GM23248 (cell line): ENCODE measurements at regions of chr6 and their contacts with region 1.

Region 1: GRCh38 chr6:131923356-131923755 is 27.8 kb downstream of the CCN2 start:
- DNase-seq: peak; percentile 60
- H3K4me3 ChIP-seq: no peak overlapping the region
- H3K27ac ChIP-seq: no peak overlapping the region
- H3K4me1 ChIP-seq: peaks cover 17% of the 10 kb centered on the region
- H3K27me3 ChIP-seq: no peaks in the 10 kb centered on the region

Region 2: GRCh38 chr6:132259070-132259469 is 335.7 kb after region 1 on chr6:
- in situ Hi-C with region 1: loop called (anchors 10 kb)
- DNase-seq: peak; percentile 64
- H3K4me3 ChIP-seq: no peak overlapping the region
- H3K27ac ChIP-seq: no peak overlapping the region
- H3K4me1 ChIP-seq: no peaks in the 10 kb centered on the region
- H3K27me3 ChIP-seq: no peaks in the 10 kb centered on the region

Region 3: DNA sequence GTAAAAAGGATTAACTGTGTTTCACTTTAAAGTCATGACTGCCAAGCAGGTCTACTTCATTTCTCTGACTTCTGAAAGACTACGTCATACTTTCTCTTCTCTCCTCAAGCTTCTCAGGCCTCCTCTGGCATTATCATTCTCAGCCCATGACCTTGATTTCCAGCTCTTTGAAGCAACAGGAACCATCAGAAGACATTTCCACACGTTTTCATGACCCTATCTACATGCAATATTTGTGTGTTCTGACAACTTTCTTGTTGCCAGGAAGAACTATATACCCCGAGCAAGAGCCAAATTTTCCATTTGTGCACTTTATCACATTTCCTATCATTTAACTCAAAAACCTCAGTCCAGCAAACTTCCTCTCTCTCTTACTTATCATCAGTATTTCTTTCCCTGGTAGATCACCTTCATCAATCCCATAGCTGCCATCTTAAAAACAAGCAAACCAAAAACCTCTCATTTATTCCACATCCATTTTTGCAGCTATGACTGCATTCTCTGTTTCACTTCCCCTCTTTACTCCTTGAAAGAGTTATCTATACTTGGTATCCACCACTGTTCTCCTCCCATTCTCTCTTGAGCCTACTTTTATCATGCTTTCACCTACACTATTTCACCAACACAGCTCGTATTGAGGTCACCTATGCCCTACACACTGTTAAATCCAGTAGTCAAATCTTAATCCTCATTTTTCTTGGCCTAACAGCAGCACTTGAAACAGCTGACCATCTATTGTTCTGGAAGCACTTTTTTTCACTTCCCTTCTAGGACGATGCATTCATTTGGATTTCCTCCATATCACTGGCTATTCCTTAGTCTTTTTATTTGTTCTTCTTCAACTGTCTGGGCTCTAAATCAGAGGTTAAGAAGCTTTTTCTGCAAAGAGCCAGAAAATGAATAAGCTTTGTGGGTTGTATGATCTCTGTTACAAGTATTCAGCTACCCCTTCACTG is 542.5 kb after region 1 on chr6:
- in situ Hi-C with region 1: loop called (anchors 10 kb)
- DNase-seq: no peak
- H3K4me3 ChIP-seq: no peak overlapping the region
- H3K27ac ChIP-seq: peak overlapping the region; percentile 35; the same call in 1 of the 2 replicates
- H3K4me1 ChIP-seq: peaks cover 40% of the 10 kb centered on the region
- H3K27me3 ChIP-seq: no peaks in the 10 kb centered on the region